ENCODE measurements at regions of chr14 and their contacts with region 1.

Region 1: GRCh38 chr14:99982537-99983250 is 82.5 kb upstream of the EVL start:
- DNase-seq: peak; percentile 64 to 73 (median 69)
- H3K4me3 ChIP-seq: no peak overlapping the region
- H3K4me3 Mint-ChIP-seq: no peak overlapping the region
- H3K27ac ChIP-seq: no peak overlapping the region
- H3K27ac Mint-ChIP-seq: no peak overlapping the region
- H3K4me1 ChIP-seq: no peaks in the 10 kb centered on the region
- H3K4me1 Mint-ChIP-seq: peaks cover 3 to 11% (median 10%) of the 10 kb centered on the region in 4 donors
- H3K27me3 ChIP-seq: no peaks in the 10 kb centered on the region
- H3K27me3 Mint-ChIP-seq: no peaks in the 10 kb centered on the region

Region 2: DNA sequence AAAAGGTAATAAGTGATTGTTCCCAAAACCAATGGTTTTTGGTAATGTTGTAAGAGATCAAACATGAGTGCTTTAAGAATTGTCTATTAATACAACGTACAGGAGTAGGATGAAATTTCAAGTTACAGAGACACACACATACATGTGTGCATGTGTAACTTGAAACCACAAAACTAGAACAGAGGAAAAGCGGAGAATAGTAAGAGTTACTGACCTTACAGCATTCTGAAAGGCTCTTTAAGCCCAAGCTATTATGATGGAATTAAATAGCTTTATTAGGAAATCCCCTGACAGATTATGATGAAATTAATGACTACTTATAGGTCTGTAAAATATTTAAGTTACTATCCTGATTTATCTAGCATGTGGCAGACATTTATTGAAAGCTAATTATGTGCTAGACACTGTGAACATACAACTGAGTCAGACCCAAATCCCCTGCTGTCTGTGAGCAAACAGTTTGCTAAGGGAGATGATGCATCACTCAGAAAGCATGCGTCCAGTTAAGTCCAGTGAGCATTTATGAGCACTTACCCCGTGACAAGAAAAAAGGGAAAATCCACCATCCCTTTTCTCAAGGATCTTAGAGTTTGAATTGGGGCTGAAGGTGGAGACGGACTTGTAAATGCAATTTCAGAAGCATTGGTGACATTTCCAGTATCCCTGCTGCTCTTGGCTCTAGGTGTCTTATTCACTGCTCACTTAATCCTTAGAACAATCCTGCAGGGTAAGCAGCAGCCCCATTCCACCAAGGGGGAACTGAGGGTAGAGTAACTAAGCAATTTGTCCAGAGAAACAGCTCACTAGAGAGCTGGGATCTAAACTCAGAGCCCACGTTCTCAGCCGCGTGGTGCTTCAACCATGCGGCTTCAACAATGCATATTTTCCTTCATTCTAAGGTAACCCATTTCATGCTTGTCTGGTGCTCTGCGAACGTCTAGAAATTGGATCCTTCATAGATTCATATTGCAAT is 72.1 kb before region 1 on chr14:
- CTCF ChIA-PET with region 1: no interaction called
- POLR2A ChIA-PET with region 1: no interaction called
- intact Hi-C with region 1: no loop called
- DNase-seq: no peak
- H3K4me3 ChIP-seq: no peak overlapping the region
- H3K4me3 Mint-ChIP-seq: no peak overlapping the region
- H3K27ac ChIP-seq: no peak overlapping the region
- H3K27ac Mint-ChIP-seq: no peak overlapping the region
- H3K4me1 ChIP-seq: no peaks in the 10 kb centered on the region
- H3K4me1 Mint-ChIP-seq: no peaks in the 10 kb centered on the region
- H3K27me3 ChIP-seq: no peaks in the 10 kb centered on the region
- H3K27me3 Mint-ChIP-seq: peaks cover 12 to 22% of the 10 kb centered on the region in 2 donors

Region 3: GRCh38 chr14:99971087-99971940 is 11.4 kb before region 1 on chr14:
- CTCF ChIA-PET with region 1: interaction called, 13 read pairs
- POLR2A ChIA-PET with region 1: interaction called, 3 read pairs
- intact Hi-C with region 1: loop called (anchors 1 kb)
- DNase-seq: peak; percentile 77 to 83 (median 80)
- H3K4me3 ChIP-seq: peak overlapping the region in 1 of 2 donors; percentile 64
- H3K4me3 Mint-ChIP-seq: peak overlapping the region; percentile 56 to 81 (median 74)
- H3K27ac ChIP-seq: no peak overlapping the region
- H3K27ac Mint-ChIP-seq: peak overlapping the region in 1 of 7 donors; percentile 68
- H3K4me1 ChIP-seq: peaks cover 13% of the 10 kb centered on the region
- H3K4me1 Mint-ChIP-seq: peaks cover 7 to 17% (median 13%) of the 10 kb centered on the region in 4 donors
- H3K27me3 ChIP-seq: no peaks in the 10 kb centered on the region
- H3K27me3 Mint-ChIP-seq: peaks cover 5 to 14% of the 10 kb centered on the region in 2 donors

Region 4: DNA sequence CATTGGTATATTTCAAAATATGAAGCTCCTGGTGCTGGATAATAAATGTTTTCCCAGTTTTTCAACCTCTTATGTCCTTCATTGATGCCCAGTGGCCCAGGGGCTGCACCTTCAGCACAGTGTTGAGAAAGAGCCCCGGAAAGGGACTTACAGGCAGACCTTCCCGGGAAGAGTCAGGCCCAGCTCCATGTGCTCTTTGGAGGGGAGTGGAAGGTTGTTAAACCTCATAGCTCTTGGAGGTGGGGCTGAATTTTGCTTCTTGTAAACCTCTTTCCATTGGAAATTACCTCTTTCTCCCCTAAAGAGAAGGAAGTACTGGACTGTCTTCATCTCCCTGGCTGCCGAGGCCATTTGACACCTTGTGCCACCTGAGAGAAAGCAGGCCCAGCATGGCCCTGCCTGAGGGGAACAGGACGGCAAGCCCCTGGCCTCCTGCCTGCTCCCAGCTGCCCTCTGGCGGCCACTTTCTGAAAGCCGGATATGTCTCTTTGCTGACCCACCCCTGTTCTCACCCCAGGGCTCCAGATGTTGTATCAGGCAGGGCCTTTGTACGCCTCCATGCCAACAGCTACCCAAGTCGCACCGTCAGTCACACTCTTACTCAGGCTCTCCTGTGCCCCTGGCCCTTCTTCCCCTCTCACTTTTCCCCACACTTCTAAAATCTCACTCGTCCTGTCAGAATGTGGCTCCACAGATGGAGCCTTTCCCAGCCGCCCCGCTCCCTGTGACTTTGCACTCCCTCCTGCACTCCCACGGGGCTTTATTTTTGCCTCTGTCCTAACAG is 125.5 kb after region 1 on chr14:
- CTCF ChIA-PET with region 1: interaction called, 24 read pairs
- POLR2A ChIA-PET with region 1: interaction called, 3 read pairs
- intact Hi-C with region 1: loop called (anchors 1 kb)
- DNase-seq: peak; percentile 78 to 87 (median 83)
- H3K4me3 ChIP-seq: no peak overlapping the region
- H3K4me3 Mint-ChIP-seq: peak overlapping the region; percentile 24 to 79 (median 60)
- H3K27ac ChIP-seq: peak overlapping the region; percentile 67
- H3K27ac Mint-ChIP-seq: peak overlapping the region; percentile 95 to 98 (median 96)
- H3K4me1 ChIP-seq: peaks cover 75% of the 10 kb centered on the region
- H3K4me1 Mint-ChIP-seq: peaks cover 64 to 83% (median 71%) of the 10 kb centered on the region in 4 donors
- H3K27me3 ChIP-seq: no peaks in the 10 kb centered on the region
- H3K27me3 Mint-ChIP-seq: no peaks in the 10 kb centered on the region

Region 5: DNA sequence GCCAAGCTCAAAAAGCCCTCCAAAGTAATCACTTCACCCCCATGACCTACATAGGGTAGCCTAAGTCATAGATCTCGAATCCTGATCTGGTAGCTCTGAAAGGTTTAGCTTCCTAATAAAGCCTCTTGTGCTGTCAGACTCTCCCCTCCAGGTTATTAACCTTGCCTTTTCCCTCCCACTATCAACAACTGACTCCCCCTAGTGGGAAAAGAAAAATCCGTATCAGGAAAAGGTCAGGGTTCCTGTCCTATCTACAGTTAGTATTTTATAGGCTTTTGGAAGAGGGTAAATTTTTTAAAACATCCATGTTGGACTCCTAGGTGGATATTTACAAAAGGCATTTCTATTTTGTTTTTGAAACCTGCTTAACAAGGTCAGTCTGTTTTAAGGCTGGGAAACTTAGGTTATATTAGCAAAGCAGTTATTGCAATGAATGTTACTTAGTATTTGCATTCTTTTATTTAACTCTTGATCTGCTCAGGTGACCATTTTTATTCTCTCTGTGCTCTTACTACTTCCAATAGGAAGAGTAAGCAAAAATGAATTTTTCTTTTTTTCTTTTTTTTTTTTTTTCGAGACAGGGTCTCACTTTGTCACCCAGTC is 264.2 kb after region 1 on chr14:
- CTCF ChIA-PET with region 1: interaction called, 4 read pairs
- POLR2A ChIA-PET with region 1: interaction called, 3 read pairs
- intact Hi-C with region 1: loop called (anchors 2 kb)
- DNase-seq: peak in 4 of 5 donors; percentile 30 to 48 (median 44)
- H3K4me3 ChIP-seq: no peak overlapping the region
- H3K4me3 Mint-ChIP-seq: peak overlapping the region in 7 of 8 donors; percentile 6 to 72 (median 56)
- H3K27ac ChIP-seq: no peak overlapping the region
- H3K27ac Mint-ChIP-seq: peak overlapping the region; percentile 64 to 91 (median 76)
- H3K4me1 ChIP-seq: peaks cover 93% of the 10 kb centered on the region
- H3K4me1 Mint-ChIP-seq: peaks cover 54 to 80% (median 64%) of the 10 kb centered on the region in 4 donors
- H3K27me3 ChIP-seq: no peaks in the 10 kb centered on the region
- H3K27me3 Mint-ChIP-seq: no peaks in the 10 kb centered on the region

Region 6: DNA sequence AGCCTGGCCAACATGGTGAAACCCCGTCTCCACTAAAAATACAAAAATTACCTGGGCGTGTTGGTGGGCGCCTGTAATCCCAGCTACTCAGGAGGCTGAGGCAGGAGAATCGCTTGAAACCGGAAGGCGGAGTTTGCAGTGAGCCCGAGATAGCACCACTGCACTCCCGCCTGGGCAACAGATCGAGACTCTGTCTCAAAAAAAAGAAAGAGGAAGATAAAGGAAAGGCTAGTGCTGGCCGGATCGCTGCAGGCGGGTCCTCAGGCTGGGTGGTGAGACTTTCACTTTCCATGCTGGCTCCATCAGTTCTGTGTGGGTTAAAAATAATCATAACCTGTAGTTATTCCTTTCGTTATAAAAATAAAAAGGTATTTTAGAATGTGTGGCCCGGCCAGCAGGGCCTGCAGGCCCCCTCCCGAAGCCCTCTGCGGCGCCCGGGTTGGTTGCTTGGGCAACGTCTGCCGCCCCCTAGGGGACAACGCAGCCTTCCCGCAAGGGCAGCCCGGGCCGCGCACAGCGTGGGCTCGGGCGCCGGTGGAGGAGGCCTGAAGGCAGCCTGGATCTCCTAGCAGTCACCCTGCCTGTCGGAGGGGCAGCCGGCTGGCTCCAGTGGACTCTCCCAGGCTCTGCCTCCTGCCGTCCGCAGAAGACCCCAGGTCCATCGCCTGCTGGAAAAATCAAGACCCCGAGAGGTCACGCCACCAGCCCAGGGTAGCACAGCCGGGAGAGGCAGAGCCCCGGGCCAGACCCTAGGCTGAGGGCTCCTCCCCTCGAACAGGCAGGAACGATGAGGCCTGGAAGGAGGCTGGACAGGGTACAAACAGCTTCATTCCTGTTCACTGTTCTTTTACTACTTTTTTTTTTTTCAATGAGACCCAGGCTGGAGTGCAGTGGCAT is 335.5 kb after region 1 on chr14:
- CTCF ChIA-PET with region 1: no interaction called
- POLR2A ChIA-PET with region 1: no interaction called
- intact Hi-C with region 1: loop called (anchors 1 kb)
- DNase-seq: peak; percentile 56 to 63 (median 59)
- H3K4me3 ChIP-seq: peak overlapping the region in 1 of 2 donors; percentile 38
- H3K4me3 Mint-ChIP-seq: peak overlapping the region; percentile 64 to 83 (median 79)
- H3K27ac ChIP-seq: no peak overlapping the region
- H3K27ac Mint-ChIP-seq: peak overlapping the region in 1 of 7 donors; percentile 55
- H3K4me1 ChIP-seq: peaks cover 4% of the 10 kb centered on the region
- H3K4me1 Mint-ChIP-seq: peaks cover 0 to 5% (median 3%) of the 10 kb centered on the region in 4 donors
- H3K27me3 ChIP-seq: no peaks in the 10 kb centered on the region
- H3K27me3 Mint-ChIP-seq: no peaks in the 10 kb centered on the region

Region 7: DNA sequence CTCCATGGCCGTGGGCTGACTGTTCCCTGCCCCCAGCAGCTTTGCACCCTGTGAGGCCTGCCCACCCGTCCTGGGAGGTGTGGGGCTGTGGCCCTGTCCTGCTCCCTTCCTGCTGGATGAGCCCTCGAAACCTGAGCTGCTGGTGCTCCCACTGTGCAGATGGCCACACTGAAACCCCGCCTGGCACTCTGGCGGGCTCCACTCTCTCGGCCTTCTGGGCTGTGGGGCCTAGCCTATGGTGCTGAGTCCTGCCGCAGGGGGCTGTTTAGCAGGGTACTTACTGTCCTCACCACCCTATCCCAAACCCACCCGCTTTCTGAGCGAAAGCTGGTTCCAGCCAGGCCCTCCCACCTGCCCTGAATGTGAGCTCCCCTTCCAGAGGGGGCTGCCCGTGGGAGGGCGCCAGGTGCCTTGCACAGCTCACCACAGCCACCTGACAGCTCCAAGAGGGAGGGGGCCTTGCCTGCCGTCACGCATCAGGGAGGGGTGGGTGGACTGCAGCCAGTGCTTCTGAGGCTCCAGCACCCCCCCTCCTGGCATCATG is 347.8 kb after region 1 on chr14:
- CTCF ChIA-PET with region 1: no interaction called
- POLR2A ChIA-PET with region 1: no interaction called
- intact Hi-C with region 1: no loop called
- DNase-seq: no peak
- H3K4me3 ChIP-seq: no peak overlapping the region
- H3K4me3 Mint-ChIP-seq: no peak overlapping the region
- H3K27ac ChIP-seq: no peak overlapping the region
- H3K27ac Mint-ChIP-seq: no peak overlapping the region
- H3K4me1 ChIP-seq: no peaks in the 10 kb centered on the region
- H3K4me1 Mint-ChIP-seq: no peaks in the 10 kb centered on the region
- H3K27me3 ChIP-seq: no peaks in the 10 kb centered on the region
- H3K27me3 Mint-ChIP-seq: no peaks in the 10 kb centered on the region